Vagina (tissue), 2 donors: ENCODE measurements at regions of chr21 and their contacts with region 1.

Region 1: GRCh38 chr21:34202553-34203372 is 129.4 kb downstream of the MRPS6 start:
- DNase-seq: no peak
- H3K4me3 ChIP-seq: peak overlapping the region; percentile 38 to 53
- H3K27ac ChIP-seq: peak overlapping the region; percentile 68
- H3K4me1 ChIP-seq: peaks cover 36% of the 10 kb centered on the region
- H3K27me3 ChIP-seq: no peaks in the 10 kb centered on the region
- CTCF ChIP-seq: no peak
- POLR2A ChIP-seq: no peak

Region 2: GRCh38 chr21:33931799-33932390 is 270.9 kb before region 1 on chr21:
- intact Hi-C with region 1: loop called (anchors 10 kb)
- DNase-seq: no peak
- H3K4me3 ChIP-seq: peak overlapping the region; percentile 26 to 36
- H3K27ac ChIP-seq: peak overlapping the region; percentile 59
- H3K4me1 ChIP-seq: peaks cover 11% of the 10 kb centered on the region
- H3K27me3 ChIP-seq: no peaks in the 10 kb centered on the region
- CTCF ChIP-seq: no peak
- POLR2A ChIP-seq: no peak

Region 3: GRCh38 chr21:34086887-34087306 is 115.9 kb before region 1 on chr21:
- intact Hi-C with region 1: loop called (anchors 10 kb)
- DNase-seq: no peak
- H3K4me3 ChIP-seq: no peak overlapping the region
- H3K27ac ChIP-seq: no peak overlapping the region
- H3K4me1 ChIP-seq: peaks cover 28% of the 10 kb centered on the region
- H3K27me3 ChIP-seq: no peaks in the 10 kb centered on the region
- CTCF ChIP-seq: no peak
- POLR2A ChIP-seq: no peak

Region 4: DNA sequence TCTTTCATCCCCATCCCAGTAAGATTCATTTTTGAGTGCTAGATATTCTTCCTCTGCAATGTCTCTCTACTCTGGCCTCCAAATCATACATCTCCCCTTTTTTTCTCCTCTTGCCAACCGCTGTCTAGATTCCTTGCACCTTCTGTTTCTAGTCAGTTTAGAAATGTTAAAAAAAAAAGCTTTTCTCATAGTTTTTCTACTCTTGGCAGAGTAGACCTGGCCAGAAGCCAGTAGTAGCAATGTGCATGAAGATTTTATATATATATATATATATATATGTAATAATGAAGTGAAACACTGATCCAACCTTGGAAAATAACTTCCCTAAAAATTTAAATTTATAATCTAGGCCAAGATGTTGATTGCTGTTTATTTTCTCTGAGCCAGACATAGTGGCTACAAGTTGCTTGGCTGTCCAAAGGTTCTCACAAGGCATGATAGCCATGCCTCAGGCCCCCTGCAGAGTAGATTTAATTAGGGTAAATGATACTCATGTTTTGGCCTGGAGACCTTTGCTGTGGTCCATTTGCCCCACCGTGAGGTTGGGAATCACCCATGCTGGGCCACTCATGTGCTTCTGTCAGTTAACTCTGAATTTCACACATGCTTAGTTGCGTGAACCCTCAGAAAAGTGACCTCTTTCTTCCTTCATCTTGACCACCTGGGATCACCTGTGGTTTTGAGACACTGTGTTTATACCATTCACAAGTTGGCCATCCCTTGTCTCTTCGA is 57.7 kb after region 1 on chr21:
- intact Hi-C with region 1: no loop called
- DNase-seq: peak in 1 of 2 donors; percentile 18
- H3K4me3 ChIP-seq: no peak overlapping the region
- H3K27ac ChIP-seq: no peak overlapping the region
- H3K4me1 ChIP-seq: peaks cover 12% of the 10 kb centered on the region
- H3K27me3 ChIP-seq: no peaks in the 10 kb centered on the region
- CTCF ChIP-seq: no peak
- POLR2A ChIP-seq: no peak